GM12878 (cell line): ENCODE measurements at regions of chr19 and their contacts with region 1.

Region 1: DNA sequence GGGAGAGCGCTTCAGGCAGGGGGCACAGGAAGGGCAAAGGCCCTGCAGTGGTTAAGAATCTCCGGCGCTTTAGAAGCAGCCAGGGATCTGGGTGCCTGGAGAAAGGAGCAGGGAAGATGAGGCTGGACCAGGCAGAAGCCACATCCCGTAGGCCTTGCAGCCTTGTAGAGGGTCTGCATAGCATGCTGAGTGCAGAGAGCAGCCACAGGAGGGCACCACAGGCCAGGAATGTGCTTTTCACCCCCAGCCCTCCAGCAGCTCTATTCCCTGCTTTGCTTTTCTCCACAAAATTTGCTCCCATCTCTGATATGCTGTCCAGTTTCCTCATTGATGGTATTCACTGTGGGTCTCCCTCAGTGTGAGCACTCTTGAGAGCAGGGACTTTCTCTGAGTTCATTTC is 5.7 kb downstream of the WDR62 start:
- DNase-seq: no peak
- ATAC-seq: peak; percentile 82
- H3K4me3 ChIP-seq: no peak overlapping the region
- H3K27ac ChIP-seq: no peak overlapping the region
- H3K4me1 ChIP-seq: peaks cover 3% of the 10 kb centered on the region; the same call in 1 of the 2 replicates
- H3K27me3 ChIP-seq: no peaks in the 10 kb centered on the region
- CTCF ChIP-seq: peak; percentile 60 to 75 (median 67); a peak in 5 of 6 replicates
- EP300 ChIP-seq: no peak
- POLR2A ChIP-seq: no peak
- RAD21 ChIP-seq: peak; percentile 64

Region 2: DNA sequence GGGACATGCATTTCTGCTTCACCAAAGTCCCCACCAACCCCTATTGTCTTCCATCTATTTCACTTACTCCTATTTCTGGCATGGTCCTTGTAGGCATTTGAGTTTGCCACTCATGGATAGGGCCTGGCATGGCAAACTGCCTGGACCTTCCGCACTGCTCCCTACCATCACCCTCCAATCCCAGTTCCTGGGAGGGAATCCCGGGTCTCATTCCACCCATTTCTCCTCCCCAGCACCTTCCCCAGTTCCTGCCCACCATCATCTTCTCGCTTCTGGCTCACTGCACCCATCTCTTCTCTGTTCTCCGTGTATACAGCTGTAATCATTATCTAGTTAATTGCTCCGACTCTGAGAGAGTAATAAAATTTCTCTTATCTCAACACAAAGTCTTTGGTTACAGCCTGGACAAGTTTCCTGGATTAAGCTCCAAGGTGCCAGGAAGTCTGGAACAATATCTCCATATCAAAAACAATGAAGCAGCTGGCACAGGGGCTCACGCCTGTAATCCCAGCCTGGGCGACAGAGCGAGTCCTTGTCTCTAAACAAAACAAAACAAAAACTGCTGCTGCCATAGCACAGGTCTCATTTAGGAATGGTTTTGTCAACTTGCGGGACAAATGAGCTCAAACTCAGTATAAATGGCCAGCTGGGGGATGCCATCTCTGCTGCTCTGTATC is 108.8 kb after region 1 on chr19:
- CTCF ChIA-PET with region 1: interaction called, 26 read pairs
- POLR2A ChIA-PET with region 1: no interaction called
- RAD21 ChIA-PET with region 1: interaction called, 5 read pairs
- SMC1A ChIA-PET with region 1: interaction called, 20 read pairs
- in situ Hi-C with region 1: no loop called
- intact Hi-C with region 1: loop called (anchors 1 kb)
- DNase-seq: no peak
- ATAC-seq: no peak
- H3K4me3 ChIP-seq: no peak overlapping the region
- H3K27ac ChIP-seq: no peak overlapping the region
- H3K4me1 ChIP-seq: no peaks in the 10 kb centered on the region
- H3K27me3 ChIP-seq: no peaks in the 10 kb centered on the region
- CTCF ChIP-seq: no peak
- EP300 ChIP-seq: no peak
- POLR2A ChIP-seq: no peak
- RAD21 ChIP-seq: no peak